ENCODE measurements at regions of chr22 and their contacts with region 1.

Region 1: DNA sequence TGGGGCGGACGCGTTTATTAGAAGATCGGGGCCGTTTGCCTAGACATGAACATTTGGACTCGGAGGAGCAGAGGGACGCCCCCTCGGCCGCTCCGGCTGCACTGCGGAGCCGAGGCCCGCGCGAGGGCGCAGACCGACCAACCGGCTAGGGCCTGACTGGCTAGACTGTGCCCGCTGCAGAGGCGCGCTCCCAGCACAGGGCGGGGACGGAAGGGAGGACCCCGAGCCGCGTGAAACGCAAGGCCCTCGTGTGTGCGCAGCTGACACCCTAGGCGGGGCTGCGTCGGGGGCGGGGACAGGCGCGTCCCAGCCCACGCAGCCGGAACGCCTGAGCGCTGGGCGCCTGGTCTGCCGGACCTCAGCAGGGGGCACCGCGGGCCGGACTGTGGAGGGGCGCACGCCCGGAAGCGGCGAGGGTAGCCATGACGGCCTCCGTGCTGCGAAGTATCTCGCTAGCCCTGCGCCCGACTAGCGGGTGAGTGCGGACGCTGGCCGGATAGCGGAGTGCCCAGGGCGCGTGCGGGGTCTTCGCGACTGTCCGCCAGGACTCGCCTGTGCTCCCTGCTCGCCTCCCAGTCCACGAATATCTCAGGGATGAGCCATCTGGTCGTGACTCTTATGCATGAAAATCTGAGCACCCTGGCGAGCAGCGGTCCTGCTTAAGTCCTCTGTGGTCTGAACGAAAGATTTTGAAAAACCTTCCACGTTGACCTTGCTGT is at the start of gene MRPL40:
- DNase-seq: peak; percentile 93
- ATAC-seq: peak; percentile 77 to 79
- H3K4me3 ChIP-seq: peak within 1 kb of the TSS; percentile 75 to 96 (median 88)
- H3K27ac ChIP-seq: peak within 1 kb of the TSS; percentile 91 to 100 (median 100)
- H3K4me1 ChIP-seq: peaks cover 31 to 37% of the 10 kb centered on the region in 2 donors
- H3K27me3 ChIP-seq: no peaks in the 10 kb centered on the region
- CTCF ChIP-seq: peak in 1 of 5 experiments; percentile 21
- POLR2A ChIP-seq: peak; percentile 91 to 95
- total RNA-seq, gene MRPL40: 53.8 to 75.1 (median 61.5) TPM

Region 2: DNA sequence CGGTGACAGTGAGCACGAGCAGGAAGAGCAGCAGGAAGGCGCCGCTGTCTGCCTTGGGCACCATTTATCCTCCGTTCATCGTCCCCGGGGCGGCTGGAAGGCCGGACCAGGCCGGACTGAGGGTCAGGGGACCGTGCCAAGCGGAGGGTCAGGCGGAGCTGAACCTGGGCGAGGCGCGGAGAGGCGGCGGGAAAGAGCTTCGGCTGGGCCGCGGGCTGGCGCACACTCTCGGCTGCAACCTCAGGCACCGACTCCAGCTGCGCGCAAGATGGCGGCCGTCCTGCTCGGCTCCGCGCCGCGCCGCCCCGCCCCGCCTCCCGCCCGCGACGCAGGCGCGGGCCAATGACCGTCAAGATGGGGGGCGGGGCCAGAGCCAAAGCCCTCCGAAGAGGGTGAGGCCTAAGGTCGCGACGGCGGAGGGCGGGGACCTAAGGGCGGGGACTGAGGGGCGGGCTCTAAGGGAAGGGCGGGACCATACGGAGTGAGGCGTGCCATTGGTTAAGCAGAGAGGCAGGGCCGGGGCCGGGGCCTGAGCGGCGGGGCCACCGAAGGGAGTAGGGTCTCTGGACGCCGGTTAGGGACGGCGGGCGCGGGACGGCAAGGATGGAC is 310.0 kb before region 1 on chr22 and contains the start of gene DGCR2:
- in situ Hi-C with region 1: no loop called
- intact Hi-C with region 1: loop called (anchors 5 kb)
- DNase-seq: peak; percentile 96 to 97
- ATAC-seq: peak; percentile 77 to 87
- H3K4me3 ChIP-seq: peak within 1 kb of the TSS; percentile 76 to 97 (median 86)
- H3K27ac ChIP-seq: peak within 1 kb of the TSS; percentile 91 to 99 (median 97)
- H3K4me1 ChIP-seq: peaks cover 42 to 47% of the 10 kb centered on the region in 2 donors
- H3K27me3 ChIP-seq: no peaks in the 10 kb centered on the region
- CTCF ChIP-seq: no peak
- POLR2A ChIP-seq: peak; percentile 79 to 86
- total RNA-seq, gene DGCR2: 30.0 to 72.7 (median 43.5) TPM

Region 3: GRCh38 chr22:19178656-19179496 is 253.4 kb before region 1 on chr22 and contains the start of gene SLC25A1:
- in situ Hi-C with region 1: no loop called
- intact Hi-C with region 1: loop called (anchors 5 kb)
- DNase-seq: peak; percentile 78 to 87
- ATAC-seq: peak; percentile 67 to 78
- H3K4me3 ChIP-seq: peak within 1 kb of the TSS; percentile 58 to 76 (median 70)
- H3K27ac ChIP-seq: peak within 1 kb of the TSS; percentile 76 to 97 (median 93)
- H3K4me1 ChIP-seq: peaks cover 18 to 28% of the 10 kb centered on the region in 2 donors
- H3K27me3 ChIP-seq: no peaks in the 10 kb centered on the region
- CTCF ChIP-seq: no peak
- POLR2A ChIP-seq: peak; percentile 49 to 57
- total RNA-seq, gene SLC25A1: 10.5 to 16.6 (median 13.5) TPM

Region 4: DNA sequence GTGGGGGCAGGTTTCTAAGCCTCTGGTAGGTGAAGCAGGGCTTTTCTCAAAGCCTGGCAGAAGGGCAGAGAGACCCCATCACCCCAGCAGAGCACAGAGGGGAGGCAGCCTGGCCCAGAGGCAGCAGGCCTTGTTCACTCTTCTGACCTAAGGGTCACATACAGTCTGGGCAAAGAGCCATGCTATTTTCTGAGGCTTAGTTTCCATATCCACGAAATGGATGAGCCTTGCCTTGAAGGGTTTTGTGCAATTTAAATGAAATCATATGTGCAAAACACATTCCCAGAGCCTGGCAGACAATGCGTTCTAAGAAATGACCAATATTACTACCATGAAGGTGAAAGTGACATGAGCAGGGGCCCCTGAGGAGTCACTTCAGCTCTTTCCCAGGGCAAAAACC is 45.3 kb before region 1 on chr22:
- in situ Hi-C with region 1: no loop called
- intact Hi-C with region 1: loop called (anchors 1 kb)
- DNase-seq: no peak
- ATAC-seq: no peak
- H3K4me3 ChIP-seq: no peak overlapping the region
- H3K27ac ChIP-seq: no peak overlapping the region
- H3K4me1 ChIP-seq: peaks cover 5 to 12% of the 10 kb centered on the region in 2 donors
- H3K27me3 ChIP-seq: no peaks in the 10 kb centered on the region
- CTCF ChIP-seq: no peak
- POLR2A ChIP-seq: no peak

Region 5: DNA sequence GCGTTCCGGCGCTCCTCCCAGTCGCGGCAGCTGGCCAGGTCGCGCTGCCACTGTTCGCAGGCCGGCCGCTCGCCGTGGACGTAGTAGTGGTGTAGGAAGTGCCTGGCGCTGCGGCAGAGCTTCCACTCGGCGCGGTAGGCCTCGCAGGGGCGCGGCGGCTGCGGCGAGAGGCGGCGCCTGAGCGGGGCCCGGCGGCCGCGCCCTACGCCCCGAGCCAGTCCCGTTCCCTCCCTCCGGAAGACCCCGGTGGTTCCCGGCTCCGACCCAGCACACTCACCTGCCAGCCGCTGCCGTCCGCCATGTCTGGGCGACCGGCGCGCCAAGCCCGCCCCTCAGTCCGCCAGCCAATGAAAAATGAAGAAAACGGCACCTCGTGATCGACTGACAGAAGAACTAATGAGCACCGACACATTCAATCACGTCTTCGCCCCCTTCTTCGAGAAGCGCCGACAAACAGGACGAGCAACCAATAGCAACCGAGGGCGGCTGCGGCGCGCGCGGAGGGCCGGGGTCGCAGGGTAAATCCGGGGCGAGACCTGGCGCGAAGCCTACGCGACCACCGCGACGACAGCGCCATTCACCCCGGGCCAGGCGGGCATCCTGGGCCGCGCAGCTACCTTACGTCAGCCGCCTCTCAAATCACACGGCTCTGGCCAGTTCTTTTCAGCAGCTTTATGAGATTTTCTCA is 15.2 kb after region 1 on chr22 and contains the start of gene C22orf39:
- in situ Hi-C with region 1: no loop called
- intact Hi-C with region 1: loop called (anchors 1 kb)
- DNase-seq: peak; percentile 93 to 94
- ATAC-seq: peak; percentile 90
- H3K4me3 ChIP-seq: peak within 1 kb of the TSS; percentile 77 to 93 (median 86)
- H3K27ac ChIP-seq: peak within 1 kb of the TSS; percentile 91 to 100 (median 96)
- H3K4me1 ChIP-seq: peaks cover 46 to 51% of the 10 kb centered on the region in 2 donors
- H3K27me3 ChIP-seq: no peaks in the 10 kb centered on the region
- CTCF ChIP-seq: peak in 3 of 5 experiments; percentile 6 to 16 (median 10)
- POLR2A ChIP-seq: peak; percentile 91 to 95
- total RNA-seq, gene C22orf39: 157 to 182 (median 178) TPM

Measured in gastrocnemius medialis (tissue), 4 donors.